Heart right ventricle (tissue), 16 donors: ENCODE measurements at regions of chr2 and their contacts with region 1.

Region 1: DNA sequence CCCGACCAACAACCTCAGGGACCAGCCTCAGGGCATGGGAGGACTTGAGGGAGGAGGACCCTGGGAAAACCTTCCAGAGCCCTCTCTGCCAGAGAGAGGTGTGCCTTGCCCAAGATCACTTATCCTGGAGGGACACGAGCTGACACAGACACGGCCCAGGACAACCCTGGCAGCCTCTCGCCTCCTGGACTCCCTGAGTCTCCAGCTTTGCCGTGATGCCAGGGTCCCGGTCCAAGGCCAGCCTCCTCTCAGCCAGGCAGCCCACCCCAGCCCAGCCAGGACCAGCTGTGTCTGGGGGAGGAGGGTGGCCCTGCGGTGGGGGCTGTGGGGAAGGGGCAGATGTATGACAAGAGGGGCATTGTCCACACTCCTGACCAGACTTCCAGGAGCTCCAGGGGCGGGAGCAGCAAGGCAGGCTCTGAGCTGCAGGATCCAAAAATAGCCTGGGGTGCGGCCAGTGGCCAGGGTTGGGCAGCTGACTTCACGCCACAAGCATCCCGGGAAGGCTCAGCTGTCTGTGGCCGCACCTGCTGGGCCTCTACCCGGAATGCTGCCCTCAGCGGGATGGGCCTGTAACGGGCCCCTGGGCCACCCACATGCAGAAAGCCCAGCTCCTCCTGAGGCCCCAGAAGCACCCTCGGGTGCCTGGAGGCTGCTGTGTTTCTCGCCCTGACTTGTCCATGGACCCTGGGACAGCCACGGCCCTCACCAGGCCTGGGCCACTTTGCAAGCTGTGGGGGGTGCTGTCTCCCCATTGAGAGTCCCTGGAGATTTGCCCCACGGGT is 65.5 kb upstream of the GPC1 start:
- DNase-seq: peak; percentile 72 to 83
- ATAC-seq: peak; percentile 79 to 89 (median 84)
- H3K4me3 ChIP-seq: no peak overlapping the region
- H3K27ac ChIP-seq: peak overlapping the region; percentile 71 to 97 (median 92)
- H3K4me1 ChIP-seq: peaks cover 19 to 78% (median 41%) of the 10 kb centered on the region in 9 donors
- H3K27me3 ChIP-seq: no peaks in the 10 kb centered on the region
- CTCF ChIP-seq: no peak

Region 2: DNA sequence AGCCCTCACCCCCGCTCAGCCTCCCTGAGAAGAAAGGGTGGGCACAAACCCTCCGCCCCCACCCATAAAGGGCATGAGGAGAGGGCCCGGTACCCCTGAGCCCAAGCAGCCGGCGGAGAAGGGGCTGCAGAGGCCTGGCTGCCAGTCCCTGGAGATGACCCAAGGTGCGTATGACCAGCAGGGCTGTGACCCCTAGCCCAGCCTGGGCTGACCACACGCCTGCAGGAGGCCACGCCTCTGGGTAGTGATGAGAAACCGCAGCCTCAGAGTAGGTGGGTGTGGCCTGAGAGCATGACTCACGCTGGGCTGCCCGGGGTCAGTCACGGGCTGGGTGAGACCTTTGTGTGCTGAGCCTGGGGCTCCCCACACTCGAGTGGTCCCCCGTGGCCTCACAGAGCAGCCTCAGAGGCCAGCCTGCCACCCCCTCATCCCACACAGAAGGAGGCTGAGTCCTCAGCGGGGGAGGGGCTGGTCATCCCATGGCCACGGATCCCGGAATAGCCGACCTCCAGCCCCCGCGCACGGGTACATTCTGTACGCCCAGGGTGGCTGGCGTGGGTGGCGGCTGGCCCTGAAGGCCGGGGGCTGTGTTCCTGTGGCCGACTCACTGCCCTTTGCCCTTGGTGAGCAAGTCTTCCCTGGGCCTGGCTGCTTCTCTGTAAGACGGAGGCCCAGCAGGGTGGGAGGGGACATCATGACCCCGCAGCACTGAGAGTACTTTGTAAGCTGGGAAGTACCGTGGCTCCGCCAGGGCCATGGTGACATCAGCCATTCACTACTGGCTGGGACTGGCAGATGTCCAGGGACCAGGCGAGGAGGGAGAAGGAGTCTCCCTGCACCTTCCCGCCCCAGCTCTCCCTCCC is 118.8 kb before region 1 on chr2:
- intact Hi-C with region 1: loop called in 1 of 10 experiments (anchors 5 kb)
- DNase-seq: peak; percentile 89 to 90
- ATAC-seq: peak; percentile 88 to 93 (median 89)
- H3K4me3 ChIP-seq: peak overlapping the region in 5 of 10 donors; percentile 8 to 34 (median 29)
- H3K27ac ChIP-seq: peak overlapping the region; percentile 82 to 93 (median 91)
- H3K4me1 ChIP-seq: peaks cover 19 to 55% (median 28%) of the 10 kb centered on the region in 9 donors
- H3K27me3 ChIP-seq: no peaks in the 10 kb centered on the region
- CTCF ChIP-seq: no peak

Region 3: GRCh38 chr2:240259201-240259923 is 110.6 kb before region 1 on chr2:
- intact Hi-C with region 1: loop called in 2 of 10 experiments (anchors 1 to 5 kb)
- DNase-seq: peak; percentile 78 to 83
- ATAC-seq: peak; percentile 87 to 96 (median 92)
- H3K4me3 ChIP-seq: no peak overlapping the region
- H3K27ac ChIP-seq: peak overlapping the region; percentile 86 to 98 (median 93)
- H3K4me1 ChIP-seq: peaks cover 6 to 38% (median 21%) of the 10 kb centered on the region in 9 donors
- H3K27me3 ChIP-seq: no peaks in the 10 kb centered on the region
- CTCF ChIP-seq: peak in 4 of 9 donors; percentile 8 to 44 (median 37)